Caco-2 (cell line): ENCODE measurements at regions of chr10 and their contacts with region 1.

Region 1: GRCh38 chr10:118241229-118242137 is 100.6 kb downstream of the FAM204A start:
- DNase-seq: peak; percentile 77 to 81
- H3K4me3 ChIP-seq: no peak overlapping the region
- H3K4me3 Mint-ChIP-seq: no peak overlapping the region
- H3K27ac Mint-ChIP-seq: no peak overlapping the region
- H3K4me1 ChIP-seq: no peaks in the 10 kb centered on the region
- H3K4me1 Mint-ChIP-seq: no peaks in the 10 kb centered on the region
- H3K27me3 ChIP-seq: peaks cover 2% of the 10 kb centered on the region; the same call in 1 of the 2 replicates
- H3K27me3 Mint-ChIP-seq: peaks cover 3% of the 10 kb centered on the region
- CTCF ChIP-seq: peak; percentile 79 to 92

Region 2: DNA sequence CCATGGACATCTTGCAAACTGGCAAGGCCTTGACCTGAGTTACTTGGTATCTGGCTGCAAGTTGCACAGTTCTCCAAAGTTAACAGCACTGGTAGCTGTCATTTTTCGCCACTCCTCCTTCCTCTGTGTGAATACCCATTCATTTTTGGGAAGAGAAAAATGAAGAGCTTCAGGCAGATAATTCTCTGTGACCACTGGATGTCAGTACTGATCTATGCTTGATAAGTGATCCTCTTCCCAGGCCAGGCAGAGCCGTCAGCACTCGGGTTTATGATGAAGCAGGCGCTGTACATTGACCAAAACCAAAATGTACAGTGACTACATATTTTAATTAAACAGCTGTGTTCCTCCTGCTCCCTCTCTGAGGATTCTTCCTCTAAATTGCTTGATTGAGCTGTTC is 810.3 kb before region 1 on chr10:
- CTCF ChIA-PET with region 1: no interaction called
- POLR2A ChIA-PET with region 1: no interaction called
- intact Hi-C with region 1: loop called (anchors 1 kb)
- DNase-seq: peak in 1 of 2 experiments; percentile 40
- H3K4me3 ChIP-seq: no peak overlapping the region
- H3K4me3 Mint-ChIP-seq: no peak overlapping the region
- H3K27ac Mint-ChIP-seq: no peak overlapping the region
- H3K4me1 ChIP-seq: peaks cover 23% of the 10 kb centered on the region
- H3K4me1 Mint-ChIP-seq: peaks cover 5% of the 10 kb centered on the region
- H3K27me3 ChIP-seq: no peaks in the 10 kb centered on the region
- H3K27me3 Mint-ChIP-seq: no peaks in the 10 kb centered on the region
- CTCF ChIP-seq: peak; percentile 49 to 58

Region 3: GRCh38 chr10:117929327-117930067 is 312.0 kb before region 1 on chr10:
- CTCF ChIA-PET with region 1: interaction called, 3 read pairs
- POLR2A ChIA-PET with region 1: no interaction called
- intact Hi-C with region 1: loop called (anchors 1 kb)
- DNase-seq: peak in 1 of 2 experiments; percentile 34
- H3K4me3 ChIP-seq: no peak overlapping the region
- H3K4me3 Mint-ChIP-seq: no peak overlapping the region
- H3K27ac Mint-ChIP-seq: no peak overlapping the region
- H3K4me1 ChIP-seq: no peaks in the 10 kb centered on the region
- H3K4me1 Mint-ChIP-seq: no peaks in the 10 kb centered on the region
- H3K27me3 ChIP-seq: no peaks in the 10 kb centered on the region
- H3K27me3 Mint-ChIP-seq: peaks cover 12% of the 10 kb centered on the region
- CTCF ChIP-seq: peak; percentile 26 to 55

Region 4: GRCh38 chr10:118046395-118047156 is 194.9 kb before region 1 on chr10 and contains the start of gene RAB11FIP2:
- CTCF ChIA-PET with region 1: no interaction called
- POLR2A ChIA-PET with region 1: no interaction called
- intact Hi-C with region 1: loop called (anchors 5 kb)
- DNase-seq: peak; percentile 96 to 98
- H3K4me3 ChIP-seq: peak within 1 kb of the TSS; percentile 89
- H3K4me3 Mint-ChIP-seq: peak within 1 kb of the TSS; percentile 77
- H3K27ac Mint-ChIP-seq: peak within 1 kb of the TSS; percentile 81
- H3K4me1 ChIP-seq: 0 out of 2 replicates have a peak, but pooled peaks cover 6% of the 10 kb centered on the region
- H3K4me1 Mint-ChIP-seq: peaks cover 7% of the 10 kb centered on the region
- H3K27me3 ChIP-seq: no peaks in the 10 kb centered on the region
- H3K27me3 Mint-ChIP-seq: no peaks in the 10 kb centered on the region
- CTCF ChIP-seq: peak in 1 of 2 experiments; percentile 12
- total RNA-seq, gene RAB11FIP2: 25.7 and 26.6 TPM in 2 replicates

Region 5: GRCh38 chr10:118374404-118374803 is 132.9 kb after region 1 on chr10:
- CTCF ChIA-PET with region 1: no interaction called
- POLR2A ChIA-PET with region 1: no interaction called
- intact Hi-C with region 1: no loop called
- DNase-seq: no peak
- H3K4me3 ChIP-seq: no peak overlapping the region
- H3K4me3 Mint-ChIP-seq: no peak overlapping the region
- H3K27ac Mint-ChIP-seq: no peak overlapping the region
- H3K4me1 ChIP-seq: peaks cover 5% of the 10 kb centered on the region
- H3K4me1 Mint-ChIP-seq: peaks cover 9% of the 10 kb centered on the region
- H3K27me3 ChIP-seq: no peaks in the 10 kb centered on the region
- H3K27me3 Mint-ChIP-seq: peaks cover 14% of the 10 kb centered on the region
- CTCF ChIP-seq: no peak